ENCODE measurements at regions of chr19 and their contacts with region 1.

Region 1: GRCh38 chr19:17340302-17340870 is 3.0 kb downstream of the GTPBP3 start:
- DNase-seq: no peak
- H3K4me3 ChIP-seq: no peak overlapping the region
- H3K27ac ChIP-seq: no peak overlapping the region
- H3K4me1 ChIP-seq: peaks cover 0 to 9% of the 10 kb centered on the region in 2 donors
- H3K27me3 ChIP-seq: no peaks in the 10 kb centered on the region
- CTCF ChIP-seq: no peak
- POLR2A ChIP-seq: no peak

Region 2: DNA sequence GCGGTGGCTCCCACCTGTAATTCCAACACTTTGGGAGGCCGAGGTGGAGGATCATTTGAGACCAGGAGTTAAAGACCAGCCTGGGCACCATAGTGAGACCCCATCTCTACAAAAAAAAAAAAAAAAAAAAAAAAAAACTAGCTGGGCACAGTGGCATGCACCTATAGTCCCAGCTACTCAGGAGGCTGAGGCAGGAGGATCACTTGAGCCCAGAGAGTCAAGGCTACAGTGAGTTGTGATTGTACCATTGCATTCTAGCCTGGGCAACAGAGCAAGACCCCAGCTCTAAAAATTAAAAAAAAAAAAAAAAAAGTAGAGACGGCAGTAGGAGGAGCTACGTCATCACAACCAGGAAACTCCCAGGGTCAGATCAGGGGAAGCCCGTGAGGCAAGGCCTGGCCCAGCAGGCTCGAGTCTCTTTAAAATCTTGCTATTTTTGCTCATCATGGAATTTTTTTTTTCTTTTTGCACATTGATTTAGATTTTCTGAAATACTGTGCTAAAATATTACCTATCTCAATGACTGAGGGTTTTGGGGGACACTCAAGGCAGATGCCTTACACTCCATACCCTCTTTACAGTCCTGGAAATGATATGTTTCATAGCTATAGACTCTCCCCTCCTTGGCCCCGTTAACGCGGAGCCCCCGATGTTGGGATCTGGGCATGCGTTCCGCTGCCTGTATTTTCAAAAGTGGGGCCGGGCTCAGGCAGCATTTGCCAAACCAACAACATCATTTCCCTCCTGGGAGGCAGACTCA is 169.7 kb before region 1 on chr19:
- intact Hi-C with region 1: no loop called
- DNase-seq: no peak
- H3K4me3 ChIP-seq: no peak overlapping the region
- H3K27ac ChIP-seq: no peak overlapping the region
- H3K4me1 ChIP-seq: no peaks in the 10 kb centered on the region
- H3K27me3 ChIP-seq: no peaks in the 10 kb centered on the region
- CTCF ChIP-seq: no peak
- POLR2A ChIP-seq: no peak

Region 3: DNA sequence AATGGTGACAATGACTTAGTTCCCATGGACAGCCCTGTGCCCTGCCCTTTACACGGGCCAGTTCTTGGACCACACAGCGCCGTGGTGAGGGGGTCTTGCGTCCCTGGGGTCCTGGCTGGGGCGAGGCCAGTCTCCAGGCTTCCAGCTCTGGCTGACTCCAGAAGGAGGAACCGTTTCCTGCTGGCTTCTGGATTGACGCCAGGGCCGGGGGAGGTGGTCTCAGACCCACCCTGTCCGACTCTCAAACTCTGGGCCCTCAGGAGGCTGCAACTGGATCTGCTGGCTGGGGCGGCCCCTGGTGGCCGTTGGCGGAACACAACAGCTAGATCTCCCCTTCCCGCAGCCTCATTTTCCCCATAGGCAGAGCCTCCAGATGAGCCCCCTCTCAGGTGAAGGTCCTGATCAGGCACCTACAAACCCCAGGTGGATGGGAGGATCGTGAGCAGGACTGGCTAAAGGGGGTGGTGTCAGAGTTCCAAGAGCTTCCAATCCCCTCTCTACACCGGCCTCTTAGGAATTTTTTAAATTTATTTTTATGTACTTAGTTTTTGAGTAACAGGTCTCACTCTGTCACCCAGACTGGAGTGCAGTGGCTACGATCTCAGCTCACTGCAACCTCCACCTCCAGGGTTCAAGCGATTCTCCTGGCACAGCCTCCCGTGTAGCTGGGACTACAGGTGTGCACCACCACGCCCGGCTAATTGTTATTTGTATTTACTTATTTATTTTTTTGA is 45.7 kb after region 1 on chr19:
- intact Hi-C with region 1: loop called (anchors 5 kb)
- DNase-seq: peak; percentile 50 to 54
- H3K4me3 ChIP-seq: no peak overlapping the region
- H3K27ac ChIP-seq: no peak overlapping the region
- H3K4me1 ChIP-seq: no peaks in the 10 kb centered on the region
- H3K27me3 ChIP-seq: no peaks in the 10 kb centered on the region
- CTCF ChIP-seq: peak; percentile 67 to 86 (median 78)
- POLR2A ChIP-seq: no peak

Measured in uterus (tissue), 4 donors.